ENCODE measurements at regions of chr6 and their contacts with region 1.

Region 1: DNA sequence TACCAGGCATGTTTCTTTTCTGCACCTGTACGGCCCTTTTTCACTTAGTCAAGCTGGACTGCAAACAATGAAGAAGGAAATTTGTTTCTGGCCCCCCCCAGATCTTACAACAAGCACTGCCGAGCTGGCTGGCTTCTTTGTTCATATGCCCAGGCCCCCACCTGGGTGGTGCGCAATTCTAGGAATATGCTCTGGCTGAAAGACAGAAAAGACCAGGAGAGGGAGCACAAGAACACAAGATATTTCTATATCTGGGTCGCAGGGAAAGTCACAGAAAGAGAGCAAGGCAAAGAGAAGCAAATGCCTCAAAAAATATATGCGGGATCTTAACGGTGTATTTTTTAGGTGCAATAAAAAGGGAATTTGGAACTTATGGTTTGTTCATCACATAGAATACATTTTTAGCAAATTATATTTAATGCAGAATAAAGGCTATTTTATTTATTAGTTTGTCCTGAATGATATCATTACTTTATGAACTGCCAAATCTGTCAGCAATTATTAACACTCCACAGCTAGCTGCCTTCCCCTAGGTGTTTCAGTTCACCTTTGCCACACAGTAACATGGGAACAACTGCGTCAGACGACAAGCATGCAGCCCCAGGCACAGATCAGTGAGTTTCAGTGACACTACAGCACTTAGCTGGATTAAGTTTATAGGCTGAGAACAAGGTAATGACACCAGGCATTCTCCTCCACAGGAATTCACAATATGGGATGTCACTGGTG is 76.5 kb downstream of the GJA10 start:
- DNase-seq: peak; percentile 68
- H3K4me3 Mint-ChIP-seq: no peak overlapping the region
- H3K27ac Mint-ChIP-seq: no peak overlapping the region
- H3K4me1 Mint-ChIP-seq: no peaks in the 10 kb centered on the region
- H3K27me3 Mint-ChIP-seq: no peaks in the 10 kb centered on the region
- CTCF ChIP-seq: peak; percentile 58

Region 2: DNA sequence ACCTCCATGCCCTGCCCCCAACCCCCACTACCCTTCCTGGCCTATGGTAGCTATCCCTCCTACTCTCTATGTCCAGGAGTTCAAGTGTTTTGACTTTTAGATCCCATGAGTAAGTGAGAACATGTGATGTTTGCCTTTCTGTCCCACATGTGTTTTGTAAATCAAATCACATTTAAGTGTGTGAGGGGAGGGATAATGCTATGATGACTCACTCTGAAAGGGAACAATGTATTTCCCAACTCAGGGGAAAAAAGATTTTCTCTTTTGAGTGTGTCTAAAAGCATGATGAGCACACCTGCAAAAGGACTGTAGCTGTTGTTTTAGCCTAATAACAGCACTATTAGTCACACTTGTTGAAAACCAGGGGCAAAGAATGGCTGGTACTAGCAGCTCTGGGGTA is 117.2 kb after region 1 on chr6:
- CTCF ChIA-PET with region 1: interaction called, 4 read pairs
- POLR2A ChIA-PET with region 1: interaction called, 5 read pairs
- intact Hi-C with region 1: loop called (anchors 1 kb)
- DNase-seq: peak; percentile 95
- H3K4me3 Mint-ChIP-seq: peak overlapping the region; percentile 22
- H3K27ac Mint-ChIP-seq: peak overlapping the region; percentile 99
- H3K4me1 Mint-ChIP-seq: peaks cover 35% of the 10 kb centered on the region
- H3K27me3 Mint-ChIP-seq: no peaks in the 10 kb centered on the region
- CTCF ChIP-seq: no peak

Region 3: GRCh38 chr6:90098001-90098531 is 127.3 kb after region 1 on chr6:
- CTCF ChIA-PET with region 1: interaction called, 6 read pairs
- POLR2A ChIA-PET with region 1: no interaction called
- intact Hi-C with region 1: loop called (anchors 1 kb)
- DNase-seq: peak; percentile 97
- H3K4me3 Mint-ChIP-seq: no peak overlapping the region
- H3K27ac Mint-ChIP-seq: peak overlapping the region; percentile 96
- H3K4me1 Mint-ChIP-seq: peaks cover 43% of the 10 kb centered on the region
- H3K27me3 Mint-ChIP-seq: no peaks in the 10 kb centered on the region
- CTCF ChIP-seq: peak; percentile 40

Region 4: GRCh38 chr6:90179190-90180169 is 208.7 kb after region 1 on chr6:
- CTCF ChIA-PET with region 1: interaction called, 6 read pairs
- POLR2A ChIA-PET with region 1: no interaction called
- intact Hi-C with region 1: loop called (anchors 2 kb)
- DNase-seq: peak; percentile 31
- H3K4me3 Mint-ChIP-seq: no peak overlapping the region
- H3K27ac Mint-ChIP-seq: no peak overlapping the region
- H3K4me1 Mint-ChIP-seq: peaks cover 24% of the 10 kb centered on the region
- H3K27me3 Mint-ChIP-seq: no peaks in the 10 kb centered on the region
- CTCF ChIP-seq: peak; percentile 32

Region 5: DNA sequence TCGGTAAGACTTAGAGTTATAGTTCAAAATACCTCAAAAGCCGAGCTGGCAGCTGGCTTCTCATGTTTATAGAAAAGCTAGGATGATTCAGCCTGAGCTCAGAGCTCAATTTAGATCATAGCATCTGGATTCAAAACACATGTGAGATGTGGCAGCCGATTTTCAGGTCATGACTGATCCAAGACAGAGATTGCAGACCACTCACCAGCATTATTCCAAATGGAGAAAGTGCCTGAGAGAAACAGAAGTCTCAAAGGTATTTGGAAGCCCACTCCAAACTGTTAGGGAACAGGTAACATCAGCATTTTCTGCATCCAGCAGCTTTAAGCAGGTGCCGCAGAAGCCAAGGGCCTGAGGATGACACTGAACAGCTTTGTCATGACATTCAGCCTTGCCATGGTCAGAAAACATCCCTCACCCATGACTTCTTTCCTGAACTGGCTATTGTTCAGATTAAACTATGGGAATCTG is 223.6 kb after region 1 on chr6:
- CTCF ChIA-PET with region 1: no interaction called
- POLR2A ChIA-PET with region 1: no interaction called
- intact Hi-C with region 1: loop called (anchors 5 kb)
- DNase-seq: peak; percentile 21
- H3K4me3 Mint-ChIP-seq: no peak overlapping the region
- H3K27ac Mint-ChIP-seq: no peak overlapping the region
- H3K4me1 Mint-ChIP-seq: peaks cover 15% of the 10 kb centered on the region
- H3K27me3 Mint-ChIP-seq: no peaks in the 10 kb centered on the region
- CTCF ChIP-seq: no peak

Region 6: GRCh38 chr6:90296346-90297114 is 325.8 kb after region 1 on chr6 and contains the start of gene BACH2:
- CTCF ChIA-PET with region 1: interaction called, 3 read pairs
- POLR2A ChIA-PET with region 1: no interaction called
- intact Hi-C with region 1: loop called (anchors 1 kb)
- DNase-seq: peak; percentile 89
- H3K4me3 Mint-ChIP-seq: peak within 1 kb of the TSS; percentile 76
- H3K27ac Mint-ChIP-seq: peak within 1 kb of the TSS; percentile 39
- H3K4me1 Mint-ChIP-seq: peaks cover 9% of the 10 kb centered on the region
- H3K27me3 Mint-ChIP-seq: peaks cover 17% of the 10 kb centered on the region
- CTCF ChIP-seq: no peak
- total RNA-seq, gene BACH2: 7.5 and 9.9 TPM in 2 replicates

Region 7: GRCh38 chr6:90472744-90473143 is 502.0 kb after region 1 on chr6:
- CTCF ChIA-PET with region 1: interaction called, 61 read pairs
- POLR2A ChIA-PET with region 1: no interaction called
- intact Hi-C with region 1: no loop called
- DNase-seq: peak; percentile 25
- H3K4me3 Mint-ChIP-seq: no peak overlapping the region
- H3K27ac Mint-ChIP-seq: no peak overlapping the region
- H3K4me1 Mint-ChIP-seq: peaks cover 44% of the 10 kb centered on the region
- H3K27me3 Mint-ChIP-seq: no peaks in the 10 kb centered on the region
- CTCF ChIP-seq: no peak